Cardiac septum (tissue), 1 donor: ENCODE measurements at regions of chr18 and their contacts with region 1.

Region 1: DNA sequence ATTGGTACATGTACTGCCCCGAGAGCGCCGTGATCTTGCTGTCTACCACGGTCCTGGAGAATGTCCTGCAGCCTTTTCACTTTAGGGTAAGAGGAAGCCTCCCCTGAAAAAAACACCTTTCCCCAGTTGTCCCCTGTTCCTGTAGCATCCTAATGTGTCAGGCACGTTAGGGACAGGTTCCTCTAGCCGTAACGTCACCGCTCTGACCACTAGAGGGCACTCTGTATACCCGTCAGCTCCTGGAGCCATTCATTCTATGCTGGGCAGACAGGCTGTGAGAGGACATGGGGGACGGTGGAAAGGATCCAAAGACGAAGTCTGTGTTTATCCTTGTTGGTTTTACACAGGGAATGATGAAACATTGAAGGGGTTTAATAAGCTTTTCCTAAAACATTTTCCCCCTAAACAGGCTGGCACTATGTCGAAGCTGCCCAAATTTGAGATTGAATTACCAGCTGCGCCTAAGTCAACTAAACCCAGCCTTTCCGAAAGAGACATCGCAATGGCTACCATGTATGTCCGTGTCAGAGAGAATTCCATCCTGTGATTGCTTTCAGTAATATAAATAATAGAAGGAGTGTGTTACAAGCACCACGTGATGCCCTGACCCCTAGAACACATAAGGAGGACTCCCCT is 12.7 kb downstream of the RMC1 start:
- DNase-seq: peak; percentile 91

Region 2: GRCh38 chr18:23166891-23167541 is 349.0 kb before region 1 on chr18:
- intact Hi-C with region 1: no loop called
- DNase-seq: no peak

Region 3: GRCh38 chr18:23183411-23184155 is 332.4 kb before region 1 on chr18:
- intact Hi-C with region 1: no loop called
- DNase-seq: no peak

Region 4: GRCh38 chr18:23317975-23318675 is 197.9 kb before region 1 on chr18:
- intact Hi-C with region 1: no loop called
- DNase-seq: no peak

Region 5: GRCh38 chr18:23586249-23587196 is 70.5 kb after region 1 on chr18 and contains the start of gene NPC1:
- intact Hi-C with region 1: loop called (anchors 2 kb)
- DNase-seq: peak; percentile 97
- total RNA-seq, gene NPC1: 16.0 TPM

Region 6: GRCh38 chr18:23812546-23813440 is 296.8 kb after region 1 on chr18:
- intact Hi-C with region 1: loop called (anchors 10 kb)
- DNase-seq: no peak